Heart right ventricle (tissue), 16 donors: ENCODE measurements at regions of chr7 and their contacts with region 1.

Region 1: DNA sequence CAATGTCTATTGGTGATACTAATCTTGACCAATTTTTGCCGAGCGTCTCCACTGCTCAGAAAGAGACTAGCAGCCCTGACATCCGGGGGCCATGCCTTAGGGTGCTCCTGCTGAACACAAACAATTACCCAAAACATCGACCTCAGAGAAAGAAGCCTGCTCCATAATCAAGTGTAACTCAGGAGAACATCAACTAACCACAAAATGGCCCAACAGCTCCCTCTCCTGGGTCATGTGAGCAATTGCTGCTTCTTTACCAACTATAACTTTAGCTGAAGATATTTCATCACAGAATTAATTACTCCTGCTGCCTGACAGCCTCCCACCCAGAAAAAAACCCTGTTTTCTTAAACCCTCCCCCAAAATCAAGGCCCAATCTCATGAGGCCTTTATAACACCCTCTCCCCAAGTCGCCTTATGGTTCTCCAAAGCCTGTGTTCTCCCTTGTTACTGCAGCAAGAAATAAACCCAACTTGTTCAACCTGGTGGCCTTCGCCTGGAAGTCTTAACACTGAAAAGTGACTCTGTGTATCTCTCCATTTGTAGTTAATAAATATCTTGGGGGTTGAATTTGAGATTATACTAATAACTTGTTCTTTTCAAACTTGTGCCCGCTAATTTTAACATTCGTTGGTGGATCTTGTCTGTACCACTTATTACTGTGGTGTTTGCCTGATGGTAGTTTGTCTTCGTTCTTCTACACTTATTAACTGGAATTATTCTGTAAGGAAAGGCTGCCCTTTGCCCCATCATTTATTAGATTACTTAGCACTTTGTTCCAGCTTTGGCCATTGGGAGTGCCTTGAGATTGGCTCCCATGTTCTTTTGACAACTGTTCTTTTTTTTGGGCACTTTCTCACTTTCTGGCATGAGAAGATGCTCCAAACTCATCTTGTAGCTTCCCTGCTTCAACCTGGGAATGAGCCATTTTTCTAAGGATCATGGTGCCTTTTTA is 21.2 kb upstream of the RAMP3 start:
- DNase-seq: peak in 1 of 2 donors; percentile 60
- ATAC-seq: peak in 7 of 8 donors; percentile 50 to 84 (median 80)
- H3K4me3 ChIP-seq: no peak overlapping the region
- H3K27ac ChIP-seq: no peak overlapping the region
- H3K4me1 ChIP-seq: no peaks in the 10 kb centered on the region
- H3K27me3 ChIP-seq: peaks cover 0 to 4% (median 0%) of the 10 kb centered on the region in 7 donors
- CTCF ChIP-seq: peak; percentile 69 to 92 (median 88)

Region 2: GRCh38 chr7:43612599-43613589 is 1523.5 kb before region 1 on chr7:
- intact Hi-C with region 1: no loop called
- DNase-seq: no peak
- ATAC-seq: peak in 6 of 8 donors; percentile 27 to 67 (median 50)
- H3K4me3 ChIP-seq: no peak overlapping the region
- H3K27ac ChIP-seq: peak overlapping the region in 5 of 10 donors; percentile 11 to 52 (median 25)
- H3K4me1 ChIP-seq: peaks cover 0 to 37% (median 18%) of the 10 kb centered on the region in 9 donors
- H3K27me3 ChIP-seq: no peaks in the 10 kb centered on the region
- CTCF ChIP-seq: no peak

Region 3: GRCh38 chr7:44581879-44582603 is 554.3 kb before region 1 on chr7 and contains the start of gene TMED4:
- intact Hi-C with region 1: loop called in 6 of 10 experiments (anchors 10 kb)
- DNase-seq: peak; percentile 99 to 100
- ATAC-seq: peak; percentile 98 to 99 (median 98)
- H3K4me3 ChIP-seq: peak within 1 kb of the TSS; percentile 72 to 99 (median 89)
- H3K27ac ChIP-seq: peak within 1 kb of the TSS; percentile 86 to 99 (median 96)
- H3K4me1 ChIP-seq: peaks cover 5 to 34% (median 24%) of the 10 kb centered on the region in 9 donors
- H3K27me3 ChIP-seq: no peaks in the 10 kb centered on the region
- CTCF ChIP-seq: no peak
- total RNA-seq, gene TMED4: 55.4 to 81.4 (median 69.4) TPM

Region 4: DNA sequence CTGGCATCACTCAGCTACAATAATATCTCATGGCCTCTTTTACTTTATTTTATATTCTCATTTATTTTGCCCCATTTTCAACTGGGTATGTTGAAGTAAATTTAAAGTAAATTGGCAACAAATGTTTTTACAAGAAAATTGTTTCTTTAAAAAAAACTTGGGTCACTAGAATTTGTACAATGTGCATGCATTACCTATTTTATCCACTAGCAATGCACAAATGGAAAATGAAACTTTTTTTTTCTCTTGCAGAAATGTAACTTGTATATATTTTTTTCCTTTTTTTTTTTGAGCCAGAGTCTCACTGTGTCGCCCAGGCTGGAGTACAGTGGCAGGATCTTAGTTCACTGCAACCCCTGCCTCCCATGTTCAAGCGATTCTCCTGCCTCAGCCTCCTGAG is 278.2 kb before region 1 on chr7:
- intact Hi-C with region 1: loop called in 9 of 10 experiments (anchors 1 to 10 kb)
- DNase-seq: no peak
- ATAC-seq: no peak
- H3K4me3 ChIP-seq: no peak overlapping the region
- H3K27ac ChIP-seq: no peak overlapping the region
- H3K4me1 ChIP-seq: peaks cover 0 to 7% (median 0%) of the 10 kb centered on the region in 9 donors
- H3K27me3 ChIP-seq: peaks cover 0 to 9% (median 0%) of the 10 kb centered on the region in 7 donors
- CTCF ChIP-seq: peak in 1 of 9 donors; percentile 14

Region 5: GRCh38 chr7:44921607-44922359 is 214.6 kb before region 1 on chr7:
- intact Hi-C with region 1: loop called in 1 of 10 experiments (anchors 2 kb)
- DNase-seq: peak; percentile 89 to 94
- ATAC-seq: peak; percentile 94 to 97 (median 96)
- H3K4me3 ChIP-seq: no peak overlapping the region
- H3K27ac ChIP-seq: no peak overlapping the region
- H3K4me1 ChIP-seq: peaks cover 0 to 4% (median 0%) of the 10 kb centered on the region in 9 donors
- H3K27me3 ChIP-seq: peaks cover 0 to 4% (median 0%) of the 10 kb centered on the region in 7 donors
- CTCF ChIP-seq: peak; percentile 85 to 94 (median 92)

Region 6: DNA sequence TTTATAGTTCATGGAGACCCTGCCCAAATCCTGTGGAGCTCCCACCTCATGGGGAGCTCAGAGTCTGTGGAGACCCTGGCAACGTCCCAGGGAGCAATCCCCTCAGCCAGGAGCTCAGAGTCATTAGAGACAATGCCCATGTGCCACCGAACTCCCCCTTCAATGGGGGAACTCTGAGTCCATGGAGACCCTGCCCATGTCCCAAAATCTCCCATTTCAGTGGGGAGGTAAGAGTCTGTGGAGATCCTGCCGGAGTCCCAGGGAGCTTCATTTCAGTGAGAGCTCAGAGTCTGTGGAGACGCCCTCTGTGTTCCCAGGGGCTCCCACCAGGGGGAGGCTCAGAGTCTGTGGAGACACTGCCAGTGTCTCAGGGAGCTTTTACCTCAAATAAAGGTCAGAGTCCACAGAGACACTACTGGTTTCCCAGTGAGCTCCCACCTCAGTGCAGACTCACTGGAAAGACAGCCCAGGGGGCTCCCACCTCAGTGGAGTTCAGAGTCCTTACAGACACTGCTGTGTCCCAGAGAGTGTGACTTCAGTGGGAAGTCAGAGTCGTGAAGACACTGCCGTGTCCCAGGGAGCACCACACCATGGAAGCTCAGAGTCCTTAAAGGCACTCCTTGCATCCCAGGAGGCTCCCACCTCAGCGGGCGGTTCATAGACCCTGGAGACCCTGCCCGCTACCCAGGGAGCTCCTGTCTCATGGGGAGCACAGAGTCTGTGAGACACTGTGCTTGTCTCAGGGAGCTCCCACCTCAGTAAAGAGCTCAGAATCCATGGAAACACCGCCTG is 162.6 kb before region 1 on chr7:
- intact Hi-C with region 1: loop called (anchors 1 to 5 kb)
- DNase-seq: peak in 1 of 2 donors; percentile 57
- ATAC-seq: peak in 6 of 8 donors; percentile 39 to 72 (median 56)
- H3K4me3 ChIP-seq: no peak overlapping the region
- H3K27ac ChIP-seq: no peak overlapping the region
- H3K4me1 ChIP-seq: peaks cover 0 to 34% (median 0%) of the 10 kb centered on the region in 9 donors
- H3K27me3 ChIP-seq: no peaks in the 10 kb centered on the region
- CTCF ChIP-seq: peak; percentile 43 to 72 (median 61)